ENCODE measurements at regions of chr12 and their contacts with region 1.

Region 1: DNA sequence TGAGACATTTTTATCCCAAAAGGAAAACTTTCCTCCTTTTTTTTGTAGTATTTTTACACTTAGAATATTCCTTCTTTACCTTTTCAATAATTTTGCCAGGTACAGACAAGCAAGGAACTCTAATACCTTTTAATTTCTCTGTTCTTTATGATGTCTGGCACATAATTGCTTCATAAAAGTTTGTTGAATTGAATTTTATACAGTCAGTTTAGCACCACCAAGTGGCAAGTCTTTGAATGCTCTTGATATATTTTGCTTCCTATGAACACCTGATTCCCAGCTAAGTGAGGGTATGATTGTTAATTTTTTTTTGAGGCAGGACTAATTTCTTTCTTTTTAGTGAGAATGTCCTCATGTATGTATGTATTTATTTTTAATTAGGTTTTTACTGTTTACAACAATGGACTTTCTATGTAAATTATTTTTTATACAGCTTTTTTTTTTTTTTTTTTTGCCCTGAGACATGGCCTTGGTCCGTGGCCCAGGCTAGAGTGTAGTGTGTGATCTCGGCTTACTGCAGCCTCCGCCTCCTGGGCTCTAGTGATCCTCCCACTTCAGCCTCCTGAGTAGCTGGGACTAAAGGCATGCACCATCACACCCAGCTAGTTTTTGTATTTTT is 6.9 kb downstream of the TBC1D15 start:
- DNase-seq: no peak
- ATAC-seq: no peak
- H3K4me3 Mint-ChIP-seq: no peak overlapping the region
- H3K27ac Mint-ChIP-seq: no peak overlapping the region
- H3K4me1 Mint-ChIP-seq: peaks cover 2% of the 10 kb centered on the region
- H3K27me3 Mint-ChIP-seq: no peaks in the 10 kb centered on the region
- CTCF ChIP-seq: peak; percentile 19; the same call in 1 of the 2 replicates

Region 2: DNA sequence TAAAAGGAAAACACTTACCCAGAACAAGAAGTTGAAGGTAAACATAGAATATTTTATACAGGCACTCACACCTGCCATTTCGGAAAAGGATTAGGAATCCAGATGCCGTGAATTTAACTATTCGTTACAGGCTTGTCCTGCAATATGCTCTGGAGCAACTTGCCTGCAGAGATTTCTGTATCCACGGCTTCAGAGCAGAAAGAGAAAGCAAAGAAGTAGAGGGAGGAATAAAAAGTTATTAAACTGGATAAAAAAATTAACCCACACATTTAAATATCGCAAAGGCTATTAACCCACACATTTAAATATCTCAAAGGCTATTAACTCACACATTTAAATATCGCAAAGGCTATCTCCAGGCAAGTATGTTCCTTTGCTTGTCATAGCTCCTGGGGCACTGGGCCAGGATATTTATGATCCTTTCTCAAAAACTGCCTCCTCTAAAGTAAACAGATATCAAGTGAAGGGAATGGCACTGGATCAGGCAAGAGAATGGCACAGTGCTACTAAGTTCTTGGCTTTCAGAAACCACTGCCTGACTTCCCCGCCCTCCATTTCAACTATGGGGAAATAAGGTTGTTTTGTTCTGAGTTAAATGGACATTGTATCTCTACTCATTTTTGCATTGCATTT is 688.7 kb before region 1 on chr12 and contains the start of gene TSPAN8:
- CTCF ChIA-PET with region 1: no interaction called
- POLR2A ChIA-PET with region 1: no interaction called
- DNase-seq: no peak
- ATAC-seq: no peak
- H3K4me3 Mint-ChIP-seq: no peak within 1 kb of the TSS
- H3K27ac Mint-ChIP-seq: peak within 1 kb of the TSS; percentile 54; the same call in 1 of the 2 replicates
- H3K4me1 Mint-ChIP-seq: peaks cover 12% of the 10 kb centered on the region
- H3K27me3 Mint-ChIP-seq: no peaks in the 10 kb centered on the region
- CTCF ChIP-seq: no peak
- total RNA-seq, gene TSPAN8: 0.16 to 0.41 TPM (median 0.37 TPM) in 3 replicates

Region 3: GRCh38 chr12:71780237-71780822 is 66.1 kb before region 1 on chr12:
- CTCF ChIA-PET with region 1: interaction called, 10 read pairs
- POLR2A ChIA-PET with region 1: no interaction called
- DNase-seq: no peak
- ATAC-seq: no peak; the same call in 1 of the 2 replicates
- H3K4me3 Mint-ChIP-seq: no peak overlapping the region
- H3K27ac Mint-ChIP-seq: no peak overlapping the region
- H3K4me1 Mint-ChIP-seq: no peaks in the 10 kb centered on the region
- H3K27me3 Mint-ChIP-seq: no peaks in the 10 kb centered on the region
- CTCF ChIP-seq: peak; percentile 59; the same call in 1 of the 2 replicates

Region 4: DNA sequence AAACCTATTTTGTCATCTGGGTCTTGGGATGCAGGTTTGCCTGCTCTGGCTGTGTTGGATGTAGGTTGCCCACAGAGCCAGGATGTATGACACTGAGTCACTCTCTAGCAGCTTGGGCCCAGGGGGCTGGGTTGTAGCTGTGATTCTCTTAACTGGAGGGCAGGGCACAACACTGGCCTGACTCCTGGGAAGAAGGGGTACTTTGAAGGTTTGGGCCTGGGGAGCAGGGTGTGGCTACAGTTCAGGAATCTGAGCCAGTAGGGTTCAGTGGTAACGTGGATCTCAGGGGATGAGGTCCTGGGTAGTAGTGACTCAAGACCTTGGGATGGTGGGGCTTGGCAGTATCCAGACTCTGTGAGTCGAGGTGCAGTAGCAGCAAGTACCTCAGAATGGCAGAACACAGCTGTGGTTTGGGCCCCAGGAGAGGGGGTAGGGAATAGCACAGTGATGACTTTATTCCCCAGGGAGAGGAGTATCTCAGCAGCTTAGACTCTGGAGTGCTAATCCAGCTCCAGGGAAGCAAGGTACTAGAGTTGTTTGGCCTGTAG is 18.8 kb after region 1 on chr12:
- CTCF ChIA-PET with region 1: interaction called, 12 read pairs
- POLR2A ChIA-PET with region 1: no interaction called
- DNase-seq: no peak
- ATAC-seq: peak; percentile 30
- H3K4me3 Mint-ChIP-seq: no peak overlapping the region
- H3K27ac Mint-ChIP-seq: no peak overlapping the region; the same call in 1 of the 2 replicates
- H3K4me1 Mint-ChIP-seq: no peaks in the 10 kb centered on the region
- H3K27me3 Mint-ChIP-seq: no peaks in the 10 kb centered on the region
- CTCF ChIP-seq: no peak

Region 5: DNA sequence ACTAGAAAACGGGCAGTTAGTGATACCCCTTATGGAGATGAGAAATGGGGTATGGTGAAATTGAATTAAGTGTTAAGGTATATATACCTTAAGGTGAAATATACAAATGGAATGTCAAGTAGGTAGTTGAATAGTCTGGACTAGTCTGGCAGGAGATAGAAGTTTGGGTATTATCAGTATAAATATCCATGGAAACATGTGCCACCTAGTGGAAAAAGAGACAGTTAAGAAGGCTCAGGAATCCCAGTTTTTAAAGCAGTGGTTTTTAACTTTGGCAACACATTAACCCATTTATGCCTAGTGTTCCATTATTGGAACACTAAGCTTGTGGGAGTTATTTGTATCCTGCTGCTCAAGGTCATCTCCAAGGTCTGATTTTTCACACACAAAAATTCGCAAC is 53.7 kb after region 1 on chr12:
- CTCF ChIA-PET with region 1: no interaction called
- POLR2A ChIA-PET with region 1: no interaction called
- DNase-seq: no peak
- ATAC-seq: no peak
- H3K4me3 Mint-ChIP-seq: no peak overlapping the region
- H3K27ac Mint-ChIP-seq: no peak overlapping the region
- H3K4me1 Mint-ChIP-seq: no peaks in the 10 kb centered on the region
- H3K27me3 Mint-ChIP-seq: no peaks in the 10 kb centered on the region
- CTCF ChIP-seq: no peak

Measured in WTC11 (cell line).